Activated naive CD4-positive, alpha-beta T cell treated with anti-CD3 and anti-CD28 coated beads for 36 hours (primary cell): ENCODE measurements at regions of chr9 and their contacts with region 1.

Region 1: DNA sequence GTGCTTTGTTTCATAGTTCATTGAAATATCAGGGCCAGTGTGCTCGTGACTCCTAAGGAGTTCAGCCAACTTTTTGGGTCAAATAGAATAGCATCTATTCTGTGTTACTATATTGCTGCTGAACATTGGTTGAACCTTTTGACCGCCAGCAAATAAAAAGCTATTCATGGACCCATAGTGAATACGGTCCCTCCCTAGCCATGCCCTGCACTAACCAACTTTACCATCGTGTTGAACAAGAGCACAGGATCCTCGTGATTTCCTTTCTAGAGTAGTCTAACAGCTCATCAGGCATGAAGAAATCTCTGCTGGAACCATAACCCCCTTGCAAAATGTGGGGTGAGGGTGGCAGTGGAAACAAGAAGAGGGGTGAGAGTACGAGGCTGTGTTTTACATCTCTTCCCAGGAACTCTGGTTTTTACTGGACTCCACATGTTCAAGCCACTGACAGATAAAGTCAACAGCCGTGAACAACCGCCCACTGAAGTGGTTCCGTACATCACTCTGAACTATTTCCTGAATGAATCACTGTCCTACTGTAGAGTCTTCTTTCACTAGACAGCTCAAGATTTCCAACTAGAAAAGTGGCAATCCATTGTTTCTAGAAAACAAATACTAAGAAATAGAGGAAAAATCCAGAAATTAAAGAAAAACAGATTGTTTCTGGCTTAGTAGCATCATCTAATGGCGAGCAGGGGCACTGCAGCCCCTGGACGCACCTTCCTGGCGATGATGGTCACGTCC is 70.1 kb upstream of the SPATA31E1 start:
- DNase-seq: peak; percentile 49
- H3K4me3 Mint-ChIP-seq: no peak overlapping the region
- H3K27ac Mint-ChIP-seq: no peak overlapping the region
- H3K4me1 Mint-ChIP-seq: peaks cover 18% of the 10 kb centered on the region
- H3K27me3 Mint-ChIP-seq: peaks cover 2% of the 10 kb centered on the region

Region 2: GRCh38 chr9:87336914-87337333 is 475.6 kb before region 1 on chr9:
- CTCF ChIA-PET with region 1: no interaction called
- intact Hi-C with region 1: loop called (anchors 2 kb)
- DNase-seq: peak; percentile 28
- H3K4me3 Mint-ChIP-seq: peak overlapping the region; percentile 62
- H3K27ac Mint-ChIP-seq: no peak overlapping the region
- H3K4me1 Mint-ChIP-seq: peaks cover 10% of the 10 kb centered on the region
- H3K27me3 Mint-ChIP-seq: peaks cover 43% of the 10 kb centered on the region

Region 3: DNA sequence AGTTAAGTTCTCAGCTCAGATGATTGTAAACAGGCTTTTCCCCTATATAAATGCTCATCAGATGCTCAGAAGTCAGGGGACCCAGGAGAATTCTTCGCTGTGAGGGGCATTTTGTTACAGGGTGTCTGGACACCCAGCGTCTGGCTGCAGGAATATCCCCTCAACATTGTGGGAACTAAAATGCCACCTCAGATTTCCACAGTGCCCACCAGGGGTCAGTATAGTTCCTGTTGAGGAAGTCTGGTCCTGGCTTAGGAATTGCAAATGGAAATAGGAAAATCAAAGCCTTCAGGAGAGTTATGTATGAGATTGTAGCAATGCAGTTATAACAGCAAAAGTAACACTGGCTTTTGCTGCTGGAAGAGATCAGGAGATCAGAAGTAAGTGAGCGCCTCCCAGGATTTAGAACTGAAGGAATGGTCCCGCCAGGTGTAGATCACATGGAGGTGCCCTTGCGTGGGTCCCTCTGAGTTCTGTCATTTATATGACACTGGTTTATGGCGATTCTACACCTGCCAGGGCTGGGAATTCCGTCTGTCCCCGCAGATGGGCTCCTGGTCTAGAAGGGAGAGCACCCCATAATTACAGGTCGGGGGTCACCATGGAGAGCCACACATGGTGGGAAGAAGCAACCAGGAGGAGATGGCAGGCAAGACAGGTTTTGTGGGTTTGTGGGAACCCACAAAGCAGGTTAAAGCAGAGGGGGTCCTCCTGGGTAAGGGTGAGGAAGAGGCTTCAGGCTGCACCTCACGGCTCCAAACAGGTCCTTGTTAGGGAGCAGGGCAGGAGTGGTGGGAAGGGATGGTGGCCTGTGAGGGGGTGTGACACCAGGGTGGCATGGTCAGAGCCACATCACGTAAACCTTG is 133.7 kb before region 1 on chr9:
- CTCF ChIA-PET with region 1: interaction called, 10 read pairs
- intact Hi-C with region 1: loop called (anchors 1 kb)
- DNase-seq: peak; percentile 58
- H3K4me3 Mint-ChIP-seq: no peak overlapping the region
- H3K27ac Mint-ChIP-seq: no peak overlapping the region
- H3K4me1 Mint-ChIP-seq: peaks cover 7% of the 10 kb centered on the region
- H3K27me3 Mint-ChIP-seq: no peaks in the 10 kb centered on the region

Region 4: DNA sequence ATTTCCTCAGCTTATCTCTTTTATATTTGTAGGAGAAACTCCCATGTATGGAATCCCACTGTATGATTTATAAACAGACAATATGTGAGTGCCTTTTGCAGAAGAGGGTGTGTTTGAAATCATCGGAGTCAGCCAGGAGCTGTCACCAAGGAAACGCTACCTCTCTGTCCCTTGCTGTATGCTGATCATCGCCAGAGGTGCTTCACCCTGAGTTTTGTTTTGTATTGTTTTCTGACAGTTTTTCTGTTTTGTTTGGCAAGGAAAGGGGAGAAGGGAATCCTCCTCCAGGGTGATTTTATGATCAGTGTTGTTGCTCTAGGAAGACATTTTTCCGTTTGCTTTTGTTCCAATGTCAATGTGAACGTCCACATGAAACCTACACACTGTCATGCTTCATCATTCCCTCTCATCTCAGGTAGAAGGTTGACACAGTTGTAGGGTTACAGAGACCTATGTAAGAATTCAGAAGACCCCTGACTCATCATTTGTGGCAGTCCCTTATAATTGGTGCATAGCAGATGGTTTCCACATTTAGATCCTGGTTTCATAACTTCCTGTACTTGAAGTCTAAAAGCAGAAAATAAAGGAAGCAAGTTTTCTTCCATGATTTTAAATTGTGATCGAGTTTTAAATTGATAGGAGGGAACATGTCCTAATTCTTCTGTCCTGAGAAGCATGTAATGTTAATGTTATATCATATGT is 104.6 kb before region 1 on chr9:
- CTCF ChIA-PET with region 1: no interaction called
- intact Hi-C with region 1: loop called (anchors 1 kb)
- DNase-seq: no peak
- H3K4me3 Mint-ChIP-seq: no peak overlapping the region
- H3K27ac Mint-ChIP-seq: no peak overlapping the region
- H3K4me1 Mint-ChIP-seq: peaks cover 34% of the 10 kb centered on the region
- H3K27me3 Mint-ChIP-seq: peaks cover 3% of the 10 kb centered on the region

Region 5: GRCh38 chr9:87725900-87726709 is 86.4 kb before region 1 on chr9 and contains the start of gene CTSL:
- CTCF ChIA-PET with region 1: interaction called, 4 read pairs
- intact Hi-C with region 1: loop called (anchors 5 kb)
- DNase-seq: peak; percentile 58
- H3K4me3 Mint-ChIP-seq: peak within 1 kb of the TSS; percentile 80
- H3K27ac Mint-ChIP-seq: no peak within 1 kb of the TSS
- H3K4me1 Mint-ChIP-seq: peaks cover 33% of the 10 kb centered on the region
- H3K27me3 Mint-ChIP-seq: no peaks in the 10 kb centered on the region
- total RNA-seq, gene CTSL: 0.81 to 0.86 TPM